Transverse colon (tissue), 4 donors: ENCODE measurements at regions of chr5 and their contacts with region 1.

Region 1: DNA sequence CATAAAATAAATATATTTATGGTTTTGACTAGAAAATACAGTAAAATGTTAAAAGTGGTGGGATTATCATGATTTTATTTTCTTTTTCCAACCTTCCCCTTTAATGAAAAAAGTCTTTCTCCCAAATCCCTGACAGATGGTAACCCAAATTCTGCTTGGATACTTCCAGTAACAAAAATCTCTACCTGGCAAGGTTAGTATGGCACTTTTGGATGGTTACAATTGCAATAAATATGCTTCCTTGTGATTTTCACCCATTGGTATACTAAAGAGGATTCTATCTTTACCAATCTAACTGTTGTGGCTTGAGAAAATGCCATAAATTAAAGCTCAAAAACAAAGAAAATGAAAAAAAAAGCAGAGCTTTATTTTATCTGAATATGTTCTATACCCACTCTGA is 62.8 kb downstream of the GABRB2 start:
- DNase-seq: no peak
- H3K4me3 ChIP-seq: no peak overlapping the region
- H3K27ac ChIP-seq: no peak overlapping the region
- H3K4me1 ChIP-seq: no peaks in the 10 kb centered on the region
- H3K27me3 ChIP-seq: no peaks in the 10 kb centered on the region
- CTCF ChIP-seq: no peak
- EP300 ChIP-seq: no peak
- POLR2A ChIP-seq: no peak

Region 2: GRCh38 chr5:161034451-161034850 is 449.3 kb before region 1 on chr5:
- in situ Hi-C with region 1: no loop called
- intact Hi-C with region 1: no loop called
- DNase-seq: no peak
- H3K4me3 ChIP-seq: no peak overlapping the region
- H3K27ac ChIP-seq: no peak overlapping the region
- H3K4me1 ChIP-seq: no peaks in the 10 kb centered on the region
- H3K27me3 ChIP-seq: no peaks in the 10 kb centered on the region
- CTCF ChIP-seq: no peak
- EP300 ChIP-seq: no peak
- POLR2A ChIP-seq: no peak

Region 3: DNA sequence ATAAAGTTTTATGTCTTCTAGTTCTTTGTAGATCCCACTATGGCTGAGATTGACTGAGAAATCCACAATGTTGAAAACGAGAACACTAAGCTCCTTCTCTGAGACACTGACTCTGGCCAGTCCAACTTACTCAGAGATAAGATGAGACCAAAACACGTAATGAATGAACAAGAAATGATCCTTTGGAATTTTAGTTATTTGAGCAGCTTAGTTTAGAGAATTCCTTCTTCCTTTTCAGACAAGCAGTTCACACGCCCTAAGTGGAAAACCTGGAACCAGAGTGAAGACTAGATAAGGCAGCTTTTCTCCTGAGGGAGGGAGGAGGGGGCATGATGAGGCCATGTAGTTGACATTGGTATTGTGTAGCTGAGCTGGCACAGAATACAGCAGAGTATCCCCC is 76.8 kb before region 1 on chr5:
- in situ Hi-C with region 1: no loop called
- intact Hi-C with region 1: no loop called
- DNase-seq: no peak
- H3K4me3 ChIP-seq: no peak overlapping the region
- H3K27ac ChIP-seq: no peak overlapping the region
- H3K4me1 ChIP-seq: no peaks in the 10 kb centered on the region
- H3K27me3 ChIP-seq: no peaks in the 10 kb centered on the region
- CTCF ChIP-seq: no peak
- EP300 ChIP-seq: no peak
- POLR2A ChIP-seq: no peak

Region 4: GRCh38 chr5:161442471-161442870 is 41.2 kb before region 1 on chr5:
- in situ Hi-C with region 1: no loop called
- intact Hi-C with region 1: no loop called
- DNase-seq: no peak
- H3K4me3 ChIP-seq: no peak overlapping the region
- H3K27ac ChIP-seq: no peak overlapping the region
- H3K4me1 ChIP-seq: no peaks in the 10 kb centered on the region
- H3K27me3 ChIP-seq: no peaks in the 10 kb centered on the region
- CTCF ChIP-seq: no peak
- EP300 ChIP-seq: no peak
- POLR2A ChIP-seq: no peak

Region 5: GRCh38 chr5:161507591-161507990 is 23.9 kb after region 1 on chr5:
- in situ Hi-C with region 1: no loop called
- intact Hi-C with region 1: loop called (anchors 1 kb)
- DNase-seq: no peak
- H3K4me3 ChIP-seq: no peak overlapping the region
- H3K27ac ChIP-seq: no peak overlapping the region
- H3K4me1 ChIP-seq: no peaks in the 10 kb centered on the region
- H3K27me3 ChIP-seq: no peaks in the 10 kb centered on the region
- CTCF ChIP-seq: no peak
- EP300 ChIP-seq: no peak
- POLR2A ChIP-seq: no peak